IMR-90 (cell line): ENCODE measurements at regions of chrX and their contacts with region 1.

Region 1: GRCh38 chrX:109890895-109891502 is 111.9 kb upstream of the TMEM164 start:
- DNase-seq: peak; percentile 59
- ATAC-seq: peak; percentile 95
- H3K4me3 ChIP-seq: no peak overlapping the region
- H3K27ac ChIP-seq: no peak overlapping the region
- H3K4me1 ChIP-seq: peaks cover 2% of the 10 kb centered on the region; the same call in 1 of the 2 replicates
- H3K27me3 ChIP-seq: peaks cover 10% of the 10 kb centered on the region
- CTCF ChIP-seq: peak; percentile 77
- POLR2A ChIP-seq: no peak
- RAD21 ChIP-seq: peak; percentile 68

Region 2: GRCh38 chrX:109485470-109486340 is 405.3 kb before region 1 on chrX:
- CTCF ChIA-PET with region 1: interaction called, 12 read pairs
- POLR2A ChIA-PET with region 1: no interaction called
- dilution Hi-C with region 1: no loop called
- in situ Hi-C with region 1: loop called (anchors 5 kb)
- intact Hi-C with region 1: loop called (anchors 1 kb)
- DNase-seq: peak; percentile 66
- ATAC-seq: peak; percentile 80
- H3K4me3 ChIP-seq: no peak overlapping the region
- H3K27ac ChIP-seq: no peak overlapping the region
- H3K4me1 ChIP-seq: no peaks in the 10 kb centered on the region
- H3K27me3 ChIP-seq: peaks cover 9% of the 10 kb centered on the region
- CTCF ChIP-seq: peak; percentile 100
- POLR2A ChIP-seq: no peak
- RAD21 ChIP-seq: peak; percentile 75

Region 3: DNA sequence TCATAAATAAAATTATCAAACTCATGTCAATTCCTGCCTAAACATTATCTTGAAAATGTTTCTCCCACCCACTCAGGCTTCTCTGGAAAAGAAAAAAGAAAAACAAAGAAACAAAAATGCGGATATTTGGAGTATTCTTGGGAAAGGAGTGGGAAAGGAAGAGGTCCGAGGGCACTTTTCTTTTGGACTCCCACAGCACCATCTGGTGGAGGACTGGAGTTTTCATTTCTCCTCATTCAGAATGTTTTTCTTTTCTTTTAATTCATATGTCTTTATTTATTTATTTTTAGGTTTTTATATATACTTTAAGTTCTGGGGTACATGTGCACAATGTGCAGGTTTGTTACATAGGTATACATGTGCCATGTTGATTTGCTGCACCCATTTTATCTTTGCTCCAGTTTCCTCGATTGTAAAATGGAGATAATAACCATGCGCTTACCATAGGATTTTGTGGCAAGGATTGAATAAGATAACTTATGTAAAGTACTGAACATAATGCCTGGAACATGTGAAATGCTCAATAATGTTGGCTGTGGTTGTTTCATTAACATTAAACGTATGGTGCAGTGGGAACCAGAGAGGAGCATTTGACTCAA is 258.0 kb before region 1 on chrX:
- CTCF ChIA-PET with region 1: interaction called, 4 read pairs
- POLR2A ChIA-PET with region 1: no interaction called
- dilution Hi-C with region 1: no loop called
- in situ Hi-C with region 1: no loop called
- intact Hi-C with region 1: loop called (anchors 1 kb)
- DNase-seq: peak; percentile 26
- ATAC-seq: peak; percentile 37; the same call in 1 of the 2 replicates
- H3K4me3 ChIP-seq: no peak overlapping the region
- H3K27ac ChIP-seq: no peak overlapping the region
- H3K4me1 ChIP-seq: no peaks in the 10 kb centered on the region
- H3K27me3 ChIP-seq: no peaks in the 10 kb centered on the region; the same call in 1 of the 2 replicates
- CTCF ChIP-seq: peak; percentile 50
- POLR2A ChIP-seq: no peak
- RAD21 ChIP-seq: peak; percentile 50

Region 4: GRCh38 chrX:109709129-109709631 is 181.8 kb before region 1 on chrX:
- CTCF ChIA-PET with region 1: interaction called, 4 read pairs
- POLR2A ChIA-PET with region 1: no interaction called
- dilution Hi-C with region 1: no loop called
- in situ Hi-C with region 1: loop called (anchors 5 kb)
- intact Hi-C with region 1: loop called (anchors 1 kb)
- DNase-seq: peak; percentile 65
- ATAC-seq: peak; percentile 55
- H3K4me3 ChIP-seq: no peak overlapping the region
- H3K27ac ChIP-seq: peak overlapping the region; percentile 48; the same call in 1 of the 2 replicates
- H3K4me1 ChIP-seq: peaks cover 4% of the 10 kb centered on the region
- H3K27me3 ChIP-seq: no peaks in the 10 kb centered on the region; the same call in 1 of the 2 replicates
- CTCF ChIP-seq: peak; percentile 11; the same call in 1 of the 2 replicates
- POLR2A ChIP-seq: no peak
- RAD21 ChIP-seq: no peak

Region 5: GRCh38 chrX:109714340-109714958 is 176.6 kb before region 1 on chrX:
- CTCF ChIA-PET with region 1: interaction called, 4 read pairs
- POLR2A ChIA-PET with region 1: no interaction called
- dilution Hi-C with region 1: no loop called
- in situ Hi-C with region 1: loop called (anchors 5 kb)
- intact Hi-C with region 1: loop called (anchors 1 kb)
- DNase-seq: peak; percentile 91
- ATAC-seq: peak; percentile 80
- H3K4me3 ChIP-seq: no peak overlapping the region
- H3K27ac ChIP-seq: peak overlapping the region; percentile 96
- H3K4me1 ChIP-seq: peaks cover 2% of the 10 kb centered on the region
- H3K27me3 ChIP-seq: no peaks in the 10 kb centered on the region
- CTCF ChIP-seq: no peak
- POLR2A ChIP-seq: no peak
- RAD21 ChIP-seq: no peak

Region 6: DNA sequence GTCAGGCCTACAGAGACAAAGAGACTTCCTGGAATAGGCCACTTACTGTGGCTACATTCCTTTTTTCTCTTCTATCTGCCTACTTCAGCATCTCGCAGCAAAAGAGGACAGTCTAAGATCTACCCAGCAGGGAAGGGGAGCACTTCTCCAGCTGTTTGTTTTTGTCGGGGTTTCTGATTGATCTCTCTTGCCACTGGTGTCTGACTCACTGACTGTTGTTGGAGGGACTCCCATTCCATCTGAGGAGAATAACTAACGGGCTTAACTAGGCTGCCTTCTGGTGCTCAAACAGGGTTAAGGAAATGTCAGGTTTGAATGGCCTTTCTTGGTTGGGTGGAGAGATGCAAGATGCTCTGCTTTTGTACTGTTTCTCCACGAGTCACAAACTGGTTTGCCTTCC is 11.7 kb after region 1 on chrX:
- CTCF ChIA-PET with region 1: interaction called, 5 read pairs
- POLR2A ChIA-PET with region 1: no interaction called
- dilution Hi-C with region 1: no loop called
- in situ Hi-C with region 1: no loop called
- intact Hi-C with region 1: loop called (anchors 1 kb)
- DNase-seq: peak; percentile 61
- ATAC-seq: peak; percentile 60
- H3K4me3 ChIP-seq: no peak overlapping the region
- H3K27ac ChIP-seq: no peak overlapping the region
- H3K4me1 ChIP-seq: no peaks in the 10 kb centered on the region
- H3K27me3 ChIP-seq: peaks cover 7% of the 10 kb centered on the region
- CTCF ChIP-seq: no peak
- POLR2A ChIP-seq: no peak
- RAD21 ChIP-seq: no peak

Region 7: DNA sequence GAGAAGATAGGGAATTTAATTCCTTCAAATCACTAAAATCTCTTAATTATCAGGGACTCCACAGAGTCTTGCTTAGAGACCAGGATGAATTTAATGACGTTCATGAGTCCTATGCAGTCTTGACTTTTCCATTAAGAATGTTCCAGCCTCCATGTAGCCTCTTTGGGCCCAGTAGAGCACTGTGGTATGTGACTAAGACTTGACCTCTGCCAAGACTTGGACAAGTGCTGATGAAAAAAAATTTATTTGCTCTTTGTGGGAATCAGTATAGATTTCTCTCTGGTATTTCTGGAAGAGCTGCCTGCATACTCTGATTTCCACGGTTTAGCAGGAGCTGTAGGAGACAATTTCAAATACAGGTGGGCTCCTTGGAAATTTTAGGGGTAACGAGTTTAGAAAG is 864.1 kb after region 1 on chrX:
- CTCF ChIA-PET with region 1: no interaction called
- POLR2A ChIA-PET with region 1: no interaction called
- dilution Hi-C with region 1: no loop called
- in situ Hi-C with region 1: no loop called
- intact Hi-C with region 1: no loop called
- DNase-seq: peak; percentile 40
- ATAC-seq: no peak
- H3K4me3 ChIP-seq: no peak overlapping the region
- H3K27ac ChIP-seq: no peak overlapping the region
- H3K4me1 ChIP-seq: peaks cover 2% of the 10 kb centered on the region; the same call in 1 of the 2 replicates
- H3K27me3 ChIP-seq: peaks cover 2% of the 10 kb centered on the region
- CTCF ChIP-seq: no peak
- POLR2A ChIP-seq: no peak
- RAD21 ChIP-seq: no peak